ENCODE measurements at regions of chr2 and their contacts with region 1.

Region 1: GRCh38 chr2:231482806-231483391 is 18.6 kb upstream of the NCL start:
- DNase-seq: peak; percentile 41
- H3K4me3 ChIP-seq: peak overlapping the region; percentile 30 to 33
- H3K27ac ChIP-seq: peak overlapping the region; percentile 58 to 65
- H3K4me1 ChIP-seq: no peaks in the 10 kb centered on the region
- H3K27me3 ChIP-seq: no peaks in the 10 kb centered on the region
- CTCF ChIP-seq: peak; percentile 71 to 86 (median 82)
- POLR2A ChIP-seq: no peak

Region 2: DNA sequence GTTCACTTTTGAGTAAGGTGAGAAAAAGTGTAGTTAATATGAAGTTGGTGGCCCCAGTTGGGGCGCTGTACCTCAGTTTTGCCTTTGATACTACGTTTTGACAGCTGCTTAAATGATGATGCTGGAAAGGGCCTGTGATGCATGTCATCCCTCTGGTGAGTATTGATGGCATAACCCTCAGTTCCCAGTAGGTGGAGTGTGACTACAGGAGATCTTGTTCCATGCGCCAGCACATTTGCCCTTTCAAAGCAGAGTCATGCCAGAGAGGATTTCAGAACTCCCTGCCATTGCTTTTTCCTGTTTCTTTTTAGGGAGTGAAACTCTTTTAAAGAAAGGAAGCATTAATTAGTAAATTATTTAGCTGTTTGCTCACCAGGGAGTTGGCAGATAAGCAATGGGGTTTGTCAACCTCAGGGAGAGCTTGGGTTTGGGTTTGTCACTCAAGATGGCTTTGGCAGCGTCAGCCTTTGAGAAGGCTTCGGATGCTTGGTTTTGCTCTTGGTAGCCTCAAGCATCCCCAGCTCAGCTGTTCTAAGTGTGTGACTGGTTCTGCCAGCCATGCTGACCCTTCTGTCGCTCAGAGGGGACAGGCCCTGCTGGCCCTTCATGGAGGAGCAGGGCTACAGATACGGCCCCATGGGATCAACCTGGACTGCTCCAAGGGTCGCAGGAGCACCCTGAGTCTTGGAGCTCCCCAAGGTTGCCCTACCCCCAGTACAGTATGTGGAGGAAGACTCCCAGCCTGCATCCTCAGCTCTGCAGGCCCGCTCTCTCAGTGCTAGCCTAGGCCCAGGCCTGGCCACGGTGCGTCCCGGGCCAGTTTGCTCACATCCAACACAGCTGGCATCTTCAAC is 255.4 kb before region 1 on chr2:
- intact Hi-C with region 1: no loop called
- DNase-seq: peak; percentile 53
- H3K4me3 ChIP-seq: no peak overlapping the region
- H3K27ac ChIP-seq: peak overlapping the region; percentile 30 to 44
- H3K4me1 ChIP-seq: no peaks in the 10 kb centered on the region
- H3K27me3 ChIP-seq: no peaks in the 10 kb centered on the region
- CTCF ChIP-seq: peak; percentile 32 to 82 (median 70)
- POLR2A ChIP-seq: no peak

Region 3: GRCh38 chr2:231557571-231558237 is 74.8 kb after region 1 on chr2:
- intact Hi-C with region 1: loop called (anchors 5 kb)
- DNase-seq: peak; percentile 49
- H3K4me3 ChIP-seq: no peak overlapping the region
- H3K27ac ChIP-seq: peak overlapping the region; percentile 2 to 25
- H3K4me1 ChIP-seq: no peaks in the 10 kb centered on the region
- H3K27me3 ChIP-seq: no peaks in the 10 kb centered on the region
- CTCF ChIP-seq: peak; percentile 53 to 80 (median 70)
- POLR2A ChIP-seq: no peak